ENCODE measurements at regions of chr4 and their contacts with region 1.

Region 1: DNA sequence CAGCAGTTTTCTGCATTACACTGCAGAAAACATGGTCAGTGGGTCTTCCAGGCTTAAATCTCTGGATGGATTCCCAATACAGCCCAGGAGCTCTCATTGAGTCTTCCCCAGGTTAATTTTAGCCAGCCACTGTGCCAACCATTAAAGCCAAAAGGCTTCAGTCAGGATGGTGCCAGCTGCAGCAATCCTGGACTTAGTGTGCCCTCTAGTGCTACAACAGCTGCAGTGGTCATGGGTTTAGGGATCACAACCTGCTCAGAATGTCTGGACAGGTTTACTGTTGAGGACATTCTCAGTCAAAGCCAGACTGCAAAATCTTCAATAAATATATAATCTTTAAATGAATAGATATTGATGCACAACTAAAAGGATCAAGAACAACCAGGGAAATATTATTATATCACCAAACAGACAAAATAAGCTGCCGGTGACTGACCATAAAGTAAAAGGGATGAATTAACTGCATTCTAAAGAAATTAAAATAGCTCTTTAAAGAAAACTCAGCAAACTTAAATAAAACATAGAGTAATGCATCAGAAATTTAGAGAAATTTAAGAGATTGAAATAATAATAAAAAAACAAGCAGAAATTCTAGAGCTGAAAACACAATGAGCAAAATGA is 639.9 kb downstream of the SPOCK3 start:
- DNase-seq: peak; percentile 50
- ATAC-seq: peak; percentile 100
- H3K4me3 ChIP-seq: no peak overlapping the region
- H3K27ac ChIP-seq: no peak overlapping the region
- H3K4me1 ChIP-seq: no peaks in the 10 kb centered on the region
- H3K27me3 ChIP-seq: no peaks in the 10 kb centered on the region
- CTCF ChIP-seq: peak; percentile 72 to 80 (median 77)
- POLR2A ChIP-seq: no peak
- RAD21 ChIP-seq: peak; percentile 94

Region 2: GRCh38 chr4:165493359-165493758 is 1101.1 kb before region 1 on chr4:
- CTCF ChIA-PET with region 1: interaction called, 10 read pairs
- POLR2A ChIA-PET with region 1: no interaction called
- RAD21 ChIA-PET with region 1: interaction called in 1 of 2 experiments, 7 read pairs
- intact Hi-C with region 1: loop called (anchors 2 kb)
- DNase-seq: peak; percentile 37
- ATAC-seq: peak; percentile 100
- H3K4me3 ChIP-seq: no peak overlapping the region
- H3K27ac ChIP-seq: no peak overlapping the region
- H3K4me1 ChIP-seq: peaks cover 0 to 3% of the 10 kb centered on the region in 2 experiments; a peak in 2 of 4 replicates
- H3K27me3 ChIP-seq: no peaks in the 10 kb centered on the region
- CTCF ChIP-seq: peak; percentile 64 to 82 (median 65); a peak in 5 of 6 replicates
- POLR2A ChIP-seq: no peak
- RAD21 ChIP-seq: peak; percentile 93

Region 3: DNA sequence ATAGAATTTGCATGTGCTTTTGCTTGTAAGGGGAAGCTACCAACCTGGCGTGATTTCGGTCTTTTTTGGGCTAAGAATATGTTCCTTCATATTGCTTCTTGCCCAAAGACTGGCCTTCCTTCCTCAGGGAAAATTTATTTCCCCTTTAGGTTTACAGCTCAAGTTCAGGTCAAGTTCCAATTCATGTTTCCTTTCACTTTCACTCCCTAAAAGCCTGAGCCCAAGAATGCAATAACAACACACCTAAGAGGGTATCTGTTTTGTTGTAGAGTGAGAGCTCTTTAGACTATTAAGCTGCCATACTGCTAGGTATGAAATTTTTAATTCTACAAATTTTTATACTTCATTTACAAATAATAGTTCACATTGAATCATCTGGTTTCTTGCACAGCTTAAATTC is 421.8 kb before region 1 on chr4:
- CTCF ChIA-PET with region 1: interaction called, 10 read pairs
- POLR2A ChIA-PET with region 1: no interaction called
- RAD21 ChIA-PET with region 1: no interaction called
- intact Hi-C with region 1: no loop called
- DNase-seq: no peak
- ATAC-seq: no peak
- H3K4me3 ChIP-seq: no peak overlapping the region
- H3K27ac ChIP-seq: no peak overlapping the region
- H3K4me1 ChIP-seq: no peaks in the 10 kb centered on the region
- H3K27me3 ChIP-seq: no peaks in the 10 kb centered on the region
- CTCF ChIP-seq: no peak
- POLR2A ChIP-seq: no peak
- RAD21 ChIP-seq: no peak

Region 4: DNA sequence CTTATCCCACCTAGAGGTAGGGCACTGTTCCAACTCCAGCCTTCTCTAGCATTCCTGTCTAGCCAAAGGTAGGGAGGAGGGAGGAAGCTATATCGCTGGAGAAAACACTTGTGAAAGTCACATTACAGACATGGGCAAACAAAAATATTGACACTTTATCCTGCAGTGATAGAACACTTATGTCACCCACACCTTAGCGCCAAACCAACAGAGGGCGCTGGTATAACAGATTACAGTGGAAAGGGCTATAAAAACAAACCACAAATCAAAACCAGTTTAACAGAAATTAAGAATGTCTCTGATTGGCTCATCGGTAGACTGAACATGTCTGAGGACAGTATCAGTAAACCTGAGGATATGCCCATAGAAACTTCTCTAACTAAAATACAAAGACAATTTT is 270.1 kb before region 1 on chr4:
- CTCF ChIA-PET with region 1: interaction called, 12 read pairs
- POLR2A ChIA-PET with region 1: no interaction called
- RAD21 ChIA-PET with region 1: no interaction called
- intact Hi-C with region 1: loop called (anchors 5 kb)
- DNase-seq: peak; percentile 37
- ATAC-seq: peak; percentile 81
- H3K4me3 ChIP-seq: no peak overlapping the region
- H3K27ac ChIP-seq: no peak overlapping the region
- H3K4me1 ChIP-seq: no peaks in the 10 kb centered on the region
- H3K27me3 ChIP-seq: no peaks in the 10 kb centered on the region
- CTCF ChIP-seq: peak; percentile 23 to 70 (median 65); a peak in 5 of 6 replicates
- POLR2A ChIP-seq: no peak
- RAD21 ChIP-seq: peak; percentile 60

Region 5: DNA sequence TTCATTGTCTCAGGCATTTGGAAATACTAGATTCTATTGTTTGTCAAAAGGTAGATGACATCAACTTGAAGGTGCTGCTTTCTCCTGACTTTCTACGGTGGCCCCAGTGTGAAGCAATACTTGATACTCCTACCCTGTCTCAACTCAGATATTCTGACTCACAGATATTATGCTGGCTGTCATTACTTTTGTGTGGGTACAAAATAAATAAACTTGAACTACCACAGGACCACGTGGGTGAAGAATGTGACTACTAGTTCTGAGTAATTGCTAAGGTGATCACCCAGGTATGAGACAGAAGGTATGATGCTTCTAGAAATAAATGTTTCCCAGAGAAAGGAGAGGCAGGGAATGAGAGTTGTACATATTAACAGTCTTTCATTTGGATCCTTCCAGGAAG is 915.1 kb after region 1 on chr4:
- CTCF ChIA-PET with region 1: no interaction called
- POLR2A ChIA-PET with region 1: no interaction called
- RAD21 ChIA-PET with region 1: no interaction called
- intact Hi-C with region 1: no loop called
- DNase-seq: no peak
- ATAC-seq: no peak
- H3K4me3 ChIP-seq: no peak overlapping the region
- H3K27ac ChIP-seq: no peak overlapping the region
- H3K4me1 ChIP-seq: no peaks in the 10 kb centered on the region
- H3K27me3 ChIP-seq: no peaks in the 10 kb centered on the region
- CTCF ChIP-seq: no peak
- POLR2A ChIP-seq: no peak
- RAD21 ChIP-seq: no peak

Measured in HCT116 (cell line).